Activated T-helper 1 cell treated with anti-CD3 and anti-CD28 coated beads, Interleukin-12 subunit alpha, Interleukin-12 subunit beta, Interleukin-2, Interleukin-4 antibody, amounts not matched to agents 30 ng/mL and 10 ng/mL and 1 ng/mL, durations not matched to agents 14 hours and 24 hours and 36 hours (primary cell): ENCODE measurements at regions of chr9 and their contacts with region 1.

Region 1: GRCh38 chr9:127970401-127971313 is 10.1 kb downstream of the EEIG1 start:
- DNase-seq: peak; percentile 74
- H3K4me3 Mint-ChIP-seq: peak overlapping the region; percentile 69
- H3K27ac Mint-ChIP-seq: peak overlapping the region; percentile 87
- H3K4me1 Mint-ChIP-seq: peaks cover 91% of the 10 kb centered on the region
- H3K27me3 Mint-ChIP-seq: no peaks in the 10 kb centered on the region

Region 2: GRCh38 chr9:127854184-127854806 is 116.4 kb before region 1 on chr9 and contains the start of gene ENG:
- intact Hi-C with region 1: no loop called
- DNase-seq: no peak
- H3K4me3 Mint-ChIP-seq: peak within 1 kb of the TSS; percentile 86
- H3K27ac Mint-ChIP-seq: peak within 1 kb of the TSS; percentile 93
- H3K4me1 Mint-ChIP-seq: peaks cover 21% of the 10 kb centered on the region
- H3K27me3 Mint-ChIP-seq: peaks cover 2% of the 10 kb centered on the region
- total RNA-seq, gene ENG: 32.2 and 33.0 TPM in 2 replicates

Region 3: GRCh38 chr9:127955294-127956035 is 15.2 kb before region 1 on chr9:
- intact Hi-C with region 1: loop called (anchors 1 kb)
- DNase-seq: peak; percentile 56
- H3K4me3 Mint-ChIP-seq: peak overlapping the region; percentile 12
- H3K27ac Mint-ChIP-seq: peak overlapping the region; percentile 73
- H3K4me1 Mint-ChIP-seq: peaks cover 74% of the 10 kb centered on the region
- H3K27me3 Mint-ChIP-seq: peaks cover 2% of the 10 kb centered on the region

Region 4: GRCh38 chr9:128007566-128008138 is 37.0 kb after region 1 on chr9:
- intact Hi-C with region 1: loop called (anchors 2 kb)
- DNase-seq: peak; percentile 68
- H3K4me3 Mint-ChIP-seq: peak overlapping the region; percentile 65
- H3K27ac Mint-ChIP-seq: peak overlapping the region; percentile 93
- H3K4me1 Mint-ChIP-seq: peaks cover 29% of the 10 kb centered on the region
- H3K27me3 Mint-ChIP-seq: peaks cover 3% of the 10 kb centered on the region

Region 5: GRCh38 chr9:128034821-128035764 is 64.4 kb after region 1 on chr9:
- intact Hi-C with region 1: loop called (anchors 1 kb)
- DNase-seq: peak; percentile 62
- H3K4me3 Mint-ChIP-seq: no peak overlapping the region
- H3K27ac Mint-ChIP-seq: no peak overlapping the region
- H3K4me1 Mint-ChIP-seq: peaks cover 36% of the 10 kb centered on the region
- H3K27me3 Mint-ChIP-seq: peaks cover 9% of the 10 kb centered on the region